ENCODE measurements at regions of chr12 and their contacts with region 1.

Region 1: GRCh38 chr12:54452628-54453027 is 20.8 kb downstream of the GTSF1 start:
- DNase-seq: no peak

Region 2: GRCh38 chr12:54398995-54399793 is 53.4 kb before region 1 on chr12:
- in situ Hi-C with region 1: loop called (anchors 10 kb)
- DNase-seq: peak; percentile 89

Region 3: DNA sequence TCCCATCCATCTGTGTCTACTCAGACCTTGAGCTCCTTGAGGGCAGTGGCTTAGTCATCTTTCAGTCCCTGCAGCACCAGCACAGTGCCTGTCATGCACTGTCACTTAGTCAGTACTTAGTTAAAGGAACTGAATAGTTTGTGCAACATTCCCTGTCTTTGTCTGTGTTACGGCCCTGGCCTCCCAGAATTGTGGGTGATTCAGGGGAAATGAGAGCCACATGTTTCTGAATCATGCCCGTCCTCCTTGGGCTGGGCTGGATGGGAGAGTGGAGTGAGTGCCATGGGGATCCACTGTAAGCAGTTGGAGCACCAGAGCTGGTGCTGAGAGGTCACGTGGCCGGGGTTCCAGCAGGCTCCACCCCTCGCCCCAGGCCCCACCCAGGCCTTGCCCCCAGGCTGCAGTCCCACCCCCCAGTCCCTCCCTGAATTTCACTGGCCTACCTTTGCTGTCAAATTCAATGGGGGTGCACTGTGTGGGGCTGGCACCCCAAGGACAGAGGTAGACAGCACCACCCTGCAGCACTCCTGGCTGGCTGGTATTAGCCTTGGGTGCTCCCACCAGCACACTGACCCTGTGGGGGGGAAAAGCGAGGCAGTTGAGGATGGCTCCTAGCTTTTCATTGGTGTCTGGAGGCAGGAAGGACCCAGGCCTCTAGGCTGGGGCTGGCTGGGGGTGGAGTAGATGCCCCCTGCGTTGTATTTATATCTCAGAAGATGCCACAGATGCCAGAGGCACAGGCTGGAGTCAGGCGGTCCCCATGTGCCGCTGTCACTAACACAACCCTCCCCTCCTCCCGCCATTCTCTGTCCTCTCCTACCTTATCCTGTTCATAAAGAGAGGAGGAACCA is 41.0 kb before region 1 on chr12:
- in situ Hi-C with region 1: no loop called
- DNase-seq: no peak

Measured in G401 (cell line).